ENCODE measurements at regions of chr3 and their contacts with region 1.

Region 1: DNA sequence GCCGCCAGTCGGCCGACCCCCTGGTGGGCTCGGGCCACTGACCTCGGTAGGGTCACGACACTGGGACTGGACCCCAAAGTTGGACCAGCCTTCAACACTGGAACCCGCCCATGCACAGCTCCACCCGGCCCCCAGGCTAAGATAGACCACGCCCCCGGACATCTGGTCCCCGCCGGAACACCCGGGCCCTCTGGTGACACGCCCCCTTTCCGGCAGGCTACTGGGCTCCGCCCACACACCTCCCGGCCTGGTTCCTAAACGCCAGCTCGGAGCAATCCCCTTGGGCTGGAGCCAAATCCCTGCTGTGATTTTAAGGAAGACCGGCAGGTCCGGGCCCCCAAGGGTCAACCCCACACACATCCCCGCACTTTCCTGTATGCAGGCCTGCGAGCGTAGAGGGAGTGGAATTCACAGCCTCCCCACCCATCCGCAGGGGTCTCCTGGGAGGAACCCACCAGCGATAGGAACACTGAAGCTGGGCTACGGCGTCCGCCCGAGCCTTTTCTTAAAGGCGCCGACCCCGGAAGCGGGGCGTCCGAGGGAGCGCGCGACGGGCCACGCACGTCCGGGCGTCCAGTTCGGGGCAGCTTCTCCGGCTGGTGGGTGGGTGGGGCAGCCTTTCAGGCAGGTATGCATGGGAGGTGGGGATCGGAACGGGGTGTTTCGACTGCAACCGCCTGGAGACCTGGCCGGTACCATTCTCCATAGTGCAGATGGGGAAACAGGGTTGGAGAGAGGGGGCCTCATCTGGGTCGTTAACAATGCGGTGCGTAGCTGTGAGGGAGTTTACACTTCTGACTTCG is at the start of gene HEMK1:
- DNase-seq: peak; percentile 90 to 92 (median 91)
- H3K4me3 ChIP-seq: peak within 1 kb of the TSS; percentile 88 to 93
- H3K4me3 Mint-ChIP-seq: peak within 1 kb of the TSS; percentile 93 to 98 (median 96)
- H3K27ac ChIP-seq: peak within 1 kb of the TSS; percentile 83
- H3K27ac Mint-ChIP-seq: peak within 1 kb of the TSS; percentile 92 to 100 (median 98)
- H3K4me1 ChIP-seq: peaks cover 71% of the 10 kb centered on the region
- H3K4me1 Mint-ChIP-seq: peaks cover 45 to 83% (median 57%) of the 10 kb centered on the region in 4 donors
- H3K27me3 ChIP-seq: no peaks in the 10 kb centered on the region
- H3K27me3 Mint-ChIP-seq: no peaks in the 10 kb centered on the region
- total RNA-seq, gene HEMK1: 55.3 to 56.7 TPM

Region 2: DNA sequence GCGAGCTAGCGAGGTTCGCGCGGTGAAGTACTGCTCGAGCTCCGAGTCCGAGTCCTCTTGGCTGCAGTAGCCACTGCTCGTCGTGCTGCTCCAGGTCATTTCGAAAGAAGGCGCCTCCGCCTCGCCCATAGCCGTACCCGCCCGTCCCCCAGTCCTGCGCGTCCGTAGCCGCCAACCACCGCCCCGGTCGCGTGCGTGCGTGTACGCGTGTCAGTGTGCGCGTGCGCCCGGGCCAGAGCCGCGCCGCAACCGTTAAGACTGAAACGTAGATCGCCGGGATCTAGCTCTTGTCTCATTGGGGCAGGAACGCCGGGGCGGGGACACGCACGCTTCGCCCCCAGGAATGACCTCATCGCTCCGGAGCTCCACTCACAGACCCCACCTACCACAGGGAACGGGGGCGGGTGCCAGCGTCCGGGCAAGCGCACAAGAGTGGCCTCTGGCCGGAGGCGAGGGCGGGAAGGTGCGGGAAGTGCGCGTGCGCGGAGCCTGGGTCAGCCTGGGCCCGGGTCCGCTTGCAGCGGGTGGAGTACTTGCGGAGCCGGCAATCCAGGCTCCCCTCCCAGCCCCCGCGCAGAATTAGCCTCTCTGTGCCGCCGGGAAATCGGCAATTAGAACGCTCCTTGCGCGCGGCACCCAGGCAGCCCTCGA is 231.8 kb before region 1 on chr3:
- CTCF ChIA-PET with region 1: no interaction called
- POLR2A ChIA-PET with region 1: interaction called, 18 read pairs
- intact Hi-C with region 1: no loop called
- DNase-seq: peak; percentile 89 to 98 (median 92)
- H3K4me3 ChIP-seq: peak overlapping the region; percentile 87 to 94
- H3K4me3 Mint-ChIP-seq: peak overlapping the region; percentile 88 to 98 (median 95)
- H3K27ac ChIP-seq: peak overlapping the region; percentile 96
- H3K27ac Mint-ChIP-seq: peak overlapping the region; percentile 93 to 100 (median 98)
- H3K4me1 ChIP-seq: peaks cover 80% of the 10 kb centered on the region
- H3K4me1 Mint-ChIP-seq: peaks cover 42 to 76% (median 56%) of the 10 kb centered on the region in 4 donors
- H3K27me3 ChIP-seq: no peaks in the 10 kb centered on the region
- H3K27me3 Mint-ChIP-seq: no peaks in the 10 kb centered on the region

Region 3: GRCh38 chr3:50365080-50365841 is 203.9 kb before region 1 on chr3:
- CTCF ChIA-PET with region 1: no interaction called
- POLR2A ChIA-PET with region 1: interaction called, 19 read pairs
- intact Hi-C with region 1: loop called (anchors 5 kb)
- DNase-seq: peak; percentile 92 to 97 (median 95)
- H3K4me3 ChIP-seq: peak overlapping the region; percentile 73 to 100
- H3K4me3 Mint-ChIP-seq: peak overlapping the region; percentile 86 to 94 (median 90)
- H3K27ac ChIP-seq: peak overlapping the region; percentile 87
- H3K27ac Mint-ChIP-seq: peak overlapping the region; percentile 91 to 97 (median 95)
- H3K4me1 ChIP-seq: peaks cover 30% of the 10 kb centered on the region
- H3K4me1 Mint-ChIP-seq: peaks cover 4 to 35% (median 18%) of the 10 kb centered on the region in 4 donors
- H3K27me3 ChIP-seq: no peaks in the 10 kb centered on the region
- H3K27me3 Mint-ChIP-seq: peaks cover 0 to 1% of the 10 kb centered on the region in 2 donors

Region 4: DNA sequence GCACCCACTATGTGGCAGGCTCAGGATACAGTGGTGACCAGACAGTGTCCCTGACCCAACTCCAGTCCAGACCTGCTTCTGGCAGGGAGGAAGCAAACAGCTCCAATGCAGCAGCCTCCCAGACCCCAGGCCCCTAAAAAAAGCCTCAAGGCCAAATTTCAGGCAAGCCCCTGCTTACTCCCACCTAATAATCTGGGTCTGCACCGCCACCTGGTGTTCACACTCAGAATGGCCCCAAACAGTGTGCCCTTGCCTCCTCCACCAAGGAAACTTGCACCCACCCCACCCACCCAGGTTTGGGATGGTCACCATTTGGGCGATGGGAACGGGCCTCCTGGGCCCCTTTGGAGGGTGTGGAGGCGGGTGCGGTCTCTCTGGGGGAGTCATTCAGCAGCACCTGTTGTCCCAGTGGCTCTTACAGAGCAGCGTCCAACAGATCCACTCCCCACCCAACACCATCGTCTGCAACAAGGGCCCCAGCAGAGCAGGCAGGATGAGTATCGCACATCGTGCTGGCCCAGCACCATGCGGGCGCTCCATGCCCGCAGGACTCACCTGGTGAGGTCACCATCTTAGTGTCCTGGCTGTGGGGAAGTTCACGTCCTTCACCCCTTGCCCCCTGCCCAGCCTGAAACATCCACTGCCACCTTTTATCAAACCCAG is 18.9 kb before region 1 on chr3:
- CTCF ChIA-PET with region 1: interaction called, 12 read pairs
- POLR2A ChIA-PET with region 1: interaction called, 4 read pairs
- intact Hi-C with region 1: no loop called
- DNase-seq: peak; percentile 38 to 62 (median 45)
- H3K4me3 ChIP-seq: no peak overlapping the region
- H3K4me3 Mint-ChIP-seq: no peak overlapping the region
- H3K27ac ChIP-seq: no peak overlapping the region
- H3K27ac Mint-ChIP-seq: no peak overlapping the region
- H3K4me1 ChIP-seq: no peaks in the 10 kb centered on the region
- H3K4me1 Mint-ChIP-seq: no peaks in the 10 kb centered on the region
- H3K27me3 ChIP-seq: no peaks in the 10 kb centered on the region
- H3K27me3 Mint-ChIP-seq: no peaks in the 10 kb centered on the region

Region 5: DNA sequence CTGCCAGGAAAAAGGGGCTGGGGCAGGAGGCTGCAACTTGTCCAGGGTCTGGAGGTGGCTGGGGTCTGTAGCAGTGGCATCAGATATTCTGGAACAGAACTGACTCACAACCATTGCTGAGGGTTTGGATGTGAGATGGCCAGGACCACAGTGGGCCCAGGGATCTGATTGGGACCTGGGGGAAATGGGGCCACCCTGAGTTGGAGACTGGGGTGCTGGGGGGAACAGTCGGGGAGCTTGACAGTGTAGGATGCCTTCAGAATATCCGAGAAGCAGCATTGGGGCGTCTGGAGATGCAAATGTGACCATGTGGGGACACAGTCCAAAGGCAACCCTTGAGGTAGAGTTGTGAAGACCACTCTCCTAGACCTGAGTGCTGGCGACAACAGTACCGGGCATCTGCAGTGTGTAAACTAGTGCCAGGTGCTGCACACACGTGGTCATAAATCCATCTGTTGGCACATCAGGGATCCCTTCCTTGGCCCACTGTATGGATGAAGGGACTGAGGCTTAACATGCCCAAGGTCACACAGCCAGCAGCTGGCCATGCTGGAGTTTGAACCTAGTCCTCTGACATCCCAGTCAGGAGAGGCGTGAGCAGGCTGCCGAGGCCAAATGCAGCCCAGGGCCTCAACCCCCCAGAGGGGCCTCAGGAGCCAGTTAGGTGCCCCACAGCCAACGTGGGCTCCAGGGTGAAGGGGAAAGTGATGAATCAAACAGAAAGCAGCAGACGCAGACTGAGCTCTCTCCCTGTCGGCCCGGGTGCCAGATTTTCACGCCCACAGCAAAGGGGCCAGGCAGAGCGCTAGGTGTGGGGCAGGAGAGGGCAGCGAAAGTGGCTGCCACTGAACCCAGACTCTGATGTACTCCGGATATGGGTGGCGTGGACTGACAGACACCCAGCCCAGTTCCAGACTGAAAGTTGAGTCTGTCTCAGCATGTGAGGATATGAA is 18.9 kb after region 1 on chr3:
- CTCF ChIA-PET with region 1: interaction called, 277 read pairs
- POLR2A ChIA-PET with region 1: interaction called, 276 read pairs
- intact Hi-C with region 1: loop called (anchors 1 kb)
- DNase-seq: peak in 4 of 5 donors; percentile 33 to 81 (median 39)
- H3K4me3 ChIP-seq: peak overlapping the region in 1 of 2 donors; percentile 29
- H3K4me3 Mint-ChIP-seq: peak overlapping the region; percentile 52 to 84 (median 74)
- H3K27ac ChIP-seq: peak overlapping the region; percentile 51
- H3K27ac Mint-ChIP-seq: peak overlapping the region; percentile 83 to 97 (median 93)
- H3K4me1 ChIP-seq: peaks cover 74% of the 10 kb centered on the region
- H3K4me1 Mint-ChIP-seq: peaks cover 44 to 79% (median 60%) of the 10 kb centered on the region in 4 donors
- H3K27me3 ChIP-seq: no peaks in the 10 kb centered on the region
- H3K27me3 Mint-ChIP-seq: no peaks in the 10 kb centered on the region

Region 6: GRCh38 chr3:51384726-51385473 is 815.8 kb after region 1 on chr3 and contains the start of gene MANF:
- CTCF ChIA-PET with region 1: interaction called, 3 read pairs
- POLR2A ChIA-PET with region 1: interaction called, 34 read pairs
- intact Hi-C with region 1: loop called (anchors 1 kb)
- DNase-seq: peak; percentile 97 to 98 (median 98)
- H3K4me3 ChIP-seq: peak within 1 kb of the TSS; percentile 61 to 93
- H3K4me3 Mint-ChIP-seq: peak within 1 kb of the TSS; percentile 98 to 99 (median 99)
- H3K27ac ChIP-seq: peak within 1 kb of the TSS; percentile 92
- H3K27ac Mint-ChIP-seq: peak within 1 kb of the TSS; percentile 98 to 100 (median 99)
- H3K4me1 ChIP-seq: peaks cover 38% of the 10 kb centered on the region
- H3K4me1 Mint-ChIP-seq: peaks cover 25 to 62% (median 42%) of the 10 kb centered on the region in 4 donors
- H3K27me3 ChIP-seq: no peaks in the 10 kb centered on the region
- H3K27me3 Mint-ChIP-seq: no peaks in the 10 kb centered on the region
- total RNA-seq, gene MANF: 74.8 to 79.0 TPM

Measured in CD4-positive, alpha-beta memory T cell (primary cell).